Activated CD8-positive, alpha-beta memory T cell treated with anti-CD3 and anti-CD28 coated beads, Interleukin-2, amount 10 ng/mL, durations not matched to agents 7 days and 5 days (primary cell): ENCODE measurements at regions of chr17 and their contacts with region 1.

Region 1: DNA sequence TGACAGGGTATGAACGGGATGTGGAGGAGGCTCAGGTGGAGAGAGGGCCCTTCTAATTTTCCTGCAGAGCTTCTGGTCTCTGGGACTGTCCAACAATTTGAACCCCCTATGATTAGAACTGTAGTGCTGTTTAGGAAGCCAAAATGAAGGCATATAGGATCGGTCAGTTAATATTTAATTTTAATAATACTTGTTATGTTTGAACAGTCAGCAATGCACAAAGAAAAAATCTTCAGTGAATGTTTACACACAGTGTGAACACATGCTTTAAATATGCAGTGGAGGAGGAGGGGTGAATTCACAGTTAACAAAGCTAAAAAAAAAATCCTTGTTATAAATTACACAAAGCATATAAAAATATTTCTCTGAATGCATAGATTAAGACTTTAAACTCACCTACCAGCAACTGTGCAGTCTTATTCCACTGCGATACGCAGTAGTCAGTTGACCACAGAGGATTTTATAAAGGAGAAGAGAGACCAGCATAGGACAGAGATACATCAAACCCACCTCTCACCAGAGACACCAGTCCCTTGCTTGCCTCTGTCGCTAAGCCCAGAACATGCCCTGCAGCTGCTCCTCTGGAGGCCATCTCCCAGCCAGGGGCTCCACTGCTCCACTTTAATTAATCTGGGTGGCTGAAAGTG is 14.6 kb downstream of the ANKRD40 start:
- DNase-seq: no peak
- ATAC-seq: no peak
- H3K4me3 Mint-ChIP-seq: no peak overlapping the region
- H3K27ac Mint-ChIP-seq: no peak overlapping the region
- H3K4me1 Mint-ChIP-seq: peaks cover 13% of the 10 kb centered on the region
- H3K27me3 Mint-ChIP-seq: no peaks in the 10 kb centered on the region

Region 2: DNA sequence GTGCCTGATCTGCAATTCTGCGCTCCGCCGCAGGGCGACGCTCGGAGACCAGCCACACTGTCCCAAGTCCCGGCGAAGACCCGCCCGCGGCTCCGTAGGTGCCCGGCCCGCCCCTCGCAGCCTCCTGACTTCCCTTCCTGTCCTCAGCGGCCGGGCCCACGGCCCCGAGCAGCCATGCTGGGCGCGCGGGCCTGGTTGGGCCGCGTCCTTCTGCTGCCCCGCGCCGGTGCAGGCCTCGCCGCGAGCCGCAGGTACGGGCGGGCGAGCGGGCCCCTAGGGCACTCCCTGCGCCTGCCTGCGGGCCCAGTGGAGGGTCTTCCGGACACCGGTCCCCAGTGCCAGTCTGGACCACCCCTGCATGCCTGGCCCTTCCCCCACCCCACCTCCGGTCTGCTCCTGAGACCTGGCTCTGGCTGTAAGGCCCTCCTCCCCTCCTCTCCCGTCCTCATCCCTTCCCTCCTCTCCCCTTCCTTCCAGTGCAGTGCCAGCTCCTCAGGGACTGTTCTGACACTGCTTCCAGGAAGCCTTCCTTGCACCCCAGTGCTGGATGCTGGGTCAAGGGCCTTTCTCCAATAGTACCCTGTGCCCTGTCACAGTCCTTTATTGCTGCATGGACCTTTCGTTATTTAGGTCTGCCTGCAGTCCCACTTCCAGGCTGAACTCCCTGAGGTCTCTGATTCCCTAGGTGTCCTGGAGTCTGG is 146.0 kb before region 1 on chr17 and contains the start of gene SPATA20:
- CTCF ChIA-PET with region 1: interaction called, 13 read pairs
- DNase-seq: peak; percentile 94
- ATAC-seq: peak; percentile 94
- H3K4me3 Mint-ChIP-seq: peak within 1 kb of the TSS; percentile 75
- H3K27ac Mint-ChIP-seq: peak within 1 kb of the TSS; percentile 76
- H3K4me1 Mint-ChIP-seq: peaks cover 15% of the 10 kb centered on the region
- H3K27me3 Mint-ChIP-seq: peaks cover 9% of the 10 kb centered on the region
- total RNA-seq, gene SPATA20: 29.9 to 35.2 TPM

Region 3: DNA sequence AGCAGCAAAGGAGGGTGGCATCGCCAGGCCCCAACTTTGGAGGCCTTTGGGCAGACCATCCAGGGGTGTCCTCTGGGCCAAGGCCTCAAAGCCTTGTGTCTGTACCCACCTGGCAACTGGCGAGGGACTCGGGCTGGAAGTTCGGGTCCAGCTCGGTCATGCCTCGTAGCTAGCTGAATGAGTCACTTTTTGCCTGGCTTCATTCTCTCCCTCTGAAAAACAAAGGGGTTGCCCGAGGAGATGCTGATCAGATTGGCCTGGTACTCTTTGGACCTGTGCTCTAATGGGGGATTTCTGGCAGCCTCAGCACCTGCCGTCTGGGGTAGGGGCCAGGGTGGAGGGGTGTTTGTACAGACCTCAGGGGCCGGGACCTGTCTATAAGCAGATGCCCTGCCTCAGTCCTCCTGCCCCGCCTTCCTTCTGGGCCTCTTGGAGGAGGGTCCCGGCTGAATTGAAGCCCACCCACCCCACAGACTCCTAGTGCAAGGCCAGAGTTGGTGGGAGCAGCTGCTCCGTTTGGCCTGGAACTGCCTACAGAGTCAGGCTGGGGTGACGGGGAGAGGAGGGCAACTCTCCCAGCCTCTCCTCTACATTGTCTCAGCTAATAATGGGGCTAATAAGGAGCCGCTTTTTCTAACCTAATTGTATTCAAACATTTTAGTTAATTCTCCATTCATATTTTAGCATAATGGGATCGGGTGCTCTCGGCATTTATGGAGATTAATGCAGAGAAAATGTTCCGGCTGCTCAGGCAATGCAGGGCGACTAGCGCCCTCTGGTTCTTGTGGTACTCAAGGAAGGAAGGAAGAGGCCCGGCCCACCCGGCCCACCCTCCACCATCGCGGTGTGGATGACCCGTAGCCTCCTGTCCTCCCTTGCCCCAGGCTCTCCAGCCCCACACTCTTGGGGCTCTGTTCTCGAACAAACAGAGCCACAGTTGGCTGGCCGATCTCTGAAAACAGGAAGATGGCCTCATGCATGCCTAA is 79.9 kb before region 1 on chr17:
- CTCF ChIA-PET with region 1: no interaction called
- DNase-seq: no peak
- ATAC-seq: no peak
- H3K4me3 Mint-ChIP-seq: no peak overlapping the region
- H3K27ac Mint-ChIP-seq: no peak overlapping the region
- H3K4me1 Mint-ChIP-seq: peaks cover 11% of the 10 kb centered on the region
- H3K27me3 Mint-ChIP-seq: peaks cover 11% of the 10 kb centered on the region

Region 4: GRCh38 chr17:50649042-50649904 is 43.9 kb before region 1 on chr17:
- CTCF ChIA-PET with region 1: no interaction called
- DNase-seq: no peak
- ATAC-seq: no peak
- H3K4me3 Mint-ChIP-seq: no peak overlapping the region
- H3K27ac Mint-ChIP-seq: no peak overlapping the region
- H3K4me1 Mint-ChIP-seq: no peaks in the 10 kb centered on the region
- H3K27me3 Mint-ChIP-seq: peaks cover 47% of the 10 kb centered on the region